HepG2 (cell line): ENCODE measurements at regions of chr16 and their contacts with region 1.

Region 1: GRCh38 chr16:18945233-18945632 is 19.0 kb upstream of the SMG1 start:
- DNase-seq: no peak
- ATAC-seq: no peak
- H3K4me3 ChIP-seq: peak overlapping the region in 1 of 3 experiments; percentile 67; a peak in 1 of 6 replicates
- H3K27ac ChIP-seq: no peak overlapping the region
- H3K4me1 ChIP-seq: peaks cover 22% of the 10 kb centered on the region
- H3K27me3 ChIP-seq: no peaks in the 10 kb centered on the region; a peak in 3 of 5 replicates
- CTCF ChIP-seq: no peak
- EP300 ChIP-seq: no peak
- POLR2A ChIP-seq: no peak
- RAD21 ChIP-seq: no peak

Region 2: GRCh38 chr16:18834864-18835263 is 110.4 kb before region 1 on chr16:
- CTCF ChIA-PET with region 1: no interaction called
- POLR2A ChIA-PET with region 1: no interaction called
- in situ Hi-C with region 1: no loop called
- intact Hi-C with region 1: no loop called
- DNase-seq: no peak
- ATAC-seq: no peak
- H3K4me3 ChIP-seq: no peak overlapping the region
- H3K27ac ChIP-seq: no peak overlapping the region
- H3K4me1 ChIP-seq: peaks cover 8% of the 10 kb centered on the region; the same call in 1 of the 2 replicates
- H3K27me3 ChIP-seq: no peaks in the 10 kb centered on the region
- CTCF ChIP-seq: no peak
- EP300 ChIP-seq: no peak
- POLR2A ChIP-seq: no peak
- RAD21 ChIP-seq: no peak

Region 3: DNA sequence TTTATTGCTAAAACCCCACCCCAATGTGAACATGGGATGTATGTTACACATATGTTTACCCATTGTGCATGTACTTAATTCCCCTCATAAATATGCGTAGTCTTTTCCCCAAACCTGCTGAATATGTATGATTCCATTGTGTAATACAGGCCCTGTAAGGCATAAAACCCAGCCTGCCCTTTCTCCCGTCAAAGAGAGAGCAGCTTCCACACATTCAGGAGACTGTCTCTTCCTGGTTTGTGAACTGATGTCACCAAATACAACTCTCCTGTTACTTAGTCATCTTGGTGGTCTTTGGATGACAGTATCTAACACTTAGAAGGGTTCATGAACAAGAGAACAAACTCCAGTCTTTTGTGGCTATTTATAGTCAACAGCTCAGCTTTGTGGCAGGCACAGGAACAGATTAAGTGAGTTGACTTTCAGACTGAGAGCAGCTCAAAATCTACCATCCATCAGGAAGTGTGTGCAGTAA is 13.8 kb after region 1 on chr16:
- CTCF ChIA-PET with region 1: no interaction called
- POLR2A ChIA-PET with region 1: interaction called, 16 read pairs
- in situ Hi-C with region 1: no loop called
- intact Hi-C with region 1: no loop called
- DNase-seq: peak; percentile 35
- ATAC-seq: peak; percentile 17
- H3K4me3 ChIP-seq: no peak overlapping the region
- H3K27ac ChIP-seq: no peak overlapping the region
- H3K4me1 ChIP-seq: peaks cover 53% of the 10 kb centered on the region
- H3K27me3 ChIP-seq: peaks cover 3 to 8% of the 10 kb centered on the region in 2 experiments; a peak in 2 of 5 replicates
- CTCF ChIP-seq: no peak
- EP300 ChIP-seq: no peak
- POLR2A ChIP-seq: no peak
- RAD21 ChIP-seq: no peak

Region 4: GRCh38 chr16:19044769-19045168 is 99.5 kb after region 1 on chr16:
- CTCF ChIA-PET with region 1: no interaction called
- POLR2A ChIA-PET with region 1: no interaction called
- in situ Hi-C with region 1: no loop called
- intact Hi-C with region 1: no loop called
- DNase-seq: no peak
- ATAC-seq: no peak
- H3K4me3 ChIP-seq: no peak overlapping the region
- H3K27ac ChIP-seq: no peak overlapping the region
- H3K4me1 ChIP-seq: no peaks in the 10 kb centered on the region
- H3K27me3 ChIP-seq: no peaks in the 10 kb centered on the region
- CTCF ChIP-seq: no peak
- EP300 ChIP-seq: no peak
- POLR2A ChIP-seq: no peak
- RAD21 ChIP-seq: no peak

Region 5: DNA sequence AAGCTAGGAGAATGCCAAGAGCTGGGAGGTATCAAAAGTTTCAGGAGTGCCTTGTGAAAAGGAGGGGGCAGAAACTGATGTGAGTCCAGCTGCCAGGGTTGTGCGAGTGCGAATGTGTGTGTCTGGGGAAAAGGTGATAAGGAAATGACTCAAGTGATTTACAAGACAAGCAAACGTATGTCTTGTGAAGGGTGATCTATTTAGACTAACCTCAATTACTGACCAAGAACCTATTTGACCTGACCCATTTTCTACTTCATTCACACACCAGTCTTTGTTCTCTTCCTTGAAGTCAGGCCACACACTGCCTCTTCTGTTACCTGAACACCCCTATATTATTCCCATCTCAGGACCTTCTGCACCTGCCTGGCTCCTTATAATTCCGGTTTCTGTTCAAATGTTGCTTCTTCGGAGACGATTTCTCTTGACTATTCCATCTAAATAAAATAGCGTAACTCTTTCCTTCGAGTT is 575.7 kb after region 1 on chr16:
- CTCF ChIA-PET with region 1: no interaction called
- POLR2A ChIA-PET with region 1: no interaction called
- in situ Hi-C with region 1: no loop called
- intact Hi-C with region 1: no loop called
- DNase-seq: no peak
- ATAC-seq: no peak
- H3K4me3 ChIP-seq: peak overlapping the region; percentile 94 to 100 (median 95)
- H3K27ac ChIP-seq: peak overlapping the region; percentile 64
- H3K4me1 ChIP-seq: peaks cover 64% of the 10 kb centered on the region
- H3K27me3 ChIP-seq: no peaks in the 10 kb centered on the region; a peak in 1 of 5 replicates
- CTCF ChIP-seq: no peak
- EP300 ChIP-seq: no peak
- POLR2A ChIP-seq: no peak
- RAD21 ChIP-seq: no peak